Transverse colon (tissue), 4 donors: ENCODE measurements at regions of chr3 and their contacts with region 1.

Region 1: DNA sequence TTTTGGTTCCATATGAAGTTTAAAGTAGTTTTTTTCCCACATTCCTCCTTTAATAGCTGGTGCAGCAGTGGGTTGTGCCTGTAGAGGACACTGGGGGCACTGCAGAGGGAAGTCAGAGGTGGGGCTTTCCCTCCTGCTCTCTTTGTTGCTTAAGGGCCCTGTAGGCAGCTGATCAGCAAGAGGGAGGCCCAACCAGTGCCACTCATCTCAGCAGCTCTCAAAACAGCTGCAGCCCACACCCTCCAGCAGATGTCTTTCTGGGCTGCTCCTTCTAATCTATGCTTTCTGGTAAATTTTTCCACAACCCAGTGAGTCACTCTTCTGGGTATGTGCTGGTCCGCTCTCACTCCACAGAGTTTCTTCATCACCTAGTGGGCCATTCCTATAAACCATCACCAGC is 263.8 kb downstream of the FEZF2 start:
- DNase-seq: no peak
- H3K4me3 ChIP-seq: no peak overlapping the region
- H3K27ac ChIP-seq: no peak overlapping the region
- H3K4me1 ChIP-seq: no peaks in the 10 kb centered on the region
- H3K27me3 ChIP-seq: no peaks in the 10 kb centered on the region
- CTCF ChIP-seq: no peak
- EP300 ChIP-seq: no peak
- POLR2A ChIP-seq: no peak

Region 2: DNA sequence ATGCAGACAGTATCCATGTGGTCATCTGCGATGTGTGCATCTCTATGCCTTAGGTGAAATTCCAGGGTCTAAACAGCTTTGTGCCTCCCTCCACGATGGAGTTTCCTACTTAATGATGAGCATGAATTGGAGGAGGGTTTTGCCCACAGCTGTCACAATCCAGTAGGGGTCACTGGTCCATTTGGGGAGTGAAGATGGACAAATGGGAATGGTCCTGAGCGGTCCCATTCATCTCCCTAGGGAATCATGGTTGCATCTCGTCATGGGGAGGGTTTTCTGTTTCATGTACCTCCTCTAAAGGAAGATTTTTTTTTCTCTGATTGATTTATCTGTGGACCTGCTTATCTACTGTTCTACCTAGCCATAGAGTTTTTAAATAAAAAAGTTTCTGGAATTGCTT is 190.1 kb before region 1 on chr3:
- in situ Hi-C with region 1: no loop called
- intact Hi-C with region 1: loop called (anchors 5 kb)
- DNase-seq: no peak
- H3K4me3 ChIP-seq: no peak overlapping the region
- H3K27ac ChIP-seq: no peak overlapping the region
- H3K4me1 ChIP-seq: peaks cover 0 to 4% (median 1%) of the 10 kb centered on the region in 4 donors
- H3K27me3 ChIP-seq: no peaks in the 10 kb centered on the region
- CTCF ChIP-seq: no peak
- EP300 ChIP-seq: no peak
- POLR2A ChIP-seq: no peak

Region 3: DNA sequence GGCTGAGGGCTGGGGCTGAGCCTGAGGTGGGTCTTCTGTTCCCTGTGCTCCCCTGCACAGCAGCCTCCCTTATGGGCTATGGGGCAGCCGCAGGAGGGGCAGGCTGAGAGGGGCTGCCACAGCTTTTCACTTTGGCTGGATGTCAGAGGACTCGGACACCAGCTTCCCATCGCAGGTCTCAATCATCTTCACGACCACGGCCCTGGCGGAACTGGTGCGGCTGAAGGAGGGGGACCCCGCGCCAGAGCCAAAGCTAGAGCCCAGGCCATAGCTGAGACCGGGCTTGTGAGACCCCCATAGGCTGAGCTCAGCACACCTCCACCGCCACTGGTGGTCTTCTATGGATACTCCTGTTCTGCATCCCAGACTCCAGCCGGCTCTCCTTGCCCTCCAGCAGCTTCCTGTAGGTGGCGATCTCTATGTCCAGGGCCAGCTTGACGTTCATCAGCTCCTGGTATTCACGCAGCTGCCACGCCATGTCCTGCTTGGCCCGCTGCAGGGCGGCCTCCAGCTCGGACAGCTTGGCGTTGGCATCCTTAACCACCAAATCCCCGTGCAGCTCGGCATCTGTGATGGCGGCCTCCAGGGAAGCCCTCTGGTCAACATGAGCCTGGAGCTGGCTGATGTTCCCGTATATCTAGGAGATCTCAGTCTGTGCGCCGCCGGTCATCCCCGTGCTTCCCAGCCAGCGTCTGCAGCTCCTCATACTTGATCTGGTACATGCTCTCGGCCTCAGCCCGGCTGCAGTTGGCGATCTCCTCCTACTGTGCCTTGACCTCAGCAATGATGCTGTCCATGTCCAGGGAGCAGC is 986.9 kb after region 1 on chr3:
- in situ Hi-C with region 1: no loop called
- intact Hi-C with region 1: no loop called
- DNase-seq: no peak
- H3K4me3 ChIP-seq: no peak overlapping the region
- H3K27ac ChIP-seq: no peak overlapping the region
- H3K4me1 ChIP-seq: no peaks in the 10 kb centered on the region
- H3K27me3 ChIP-seq: no peaks in the 10 kb centered on the region
- CTCF ChIP-seq: no peak
- EP300 ChIP-seq: no peak
- POLR2A ChIP-seq: no peak